HepG2 (cell line): ENCODE measurements at regions of chr15 and their contacts with region 1.

Region 1: DNA sequence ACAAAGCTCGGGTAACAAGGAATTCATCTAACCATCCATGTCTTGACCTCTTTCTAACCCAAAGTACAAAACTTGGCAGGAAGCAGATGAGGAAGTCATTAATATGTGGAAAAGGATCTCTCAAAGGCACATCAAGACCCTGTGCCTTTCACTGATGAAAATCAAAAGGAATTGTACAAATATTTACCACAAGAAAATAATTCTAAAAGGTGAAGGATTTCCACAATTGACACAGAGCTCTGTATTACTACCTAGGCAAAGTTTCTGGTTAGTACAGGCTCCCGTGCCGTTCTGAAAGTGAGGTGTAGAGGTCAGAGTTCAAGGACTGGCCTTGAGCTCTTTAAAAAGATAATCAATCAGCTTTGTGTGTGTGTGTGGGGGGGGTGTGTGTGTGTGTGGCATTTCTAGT is 239.7 kb upstream of the ICE2 start:
- DNase-seq: peak; percentile 81
- ATAC-seq: peak; percentile 86
- H3K4me3 ChIP-seq: no peak overlapping the region
- H3K27ac ChIP-seq: peak overlapping the region; percentile 41
- H3K4me1 ChIP-seq: peaks cover 66% of the 10 kb centered on the region
- H3K27me3 ChIP-seq: peaks cover 0 to 2% of the 10 kb centered on the region in 2 experiments; a peak in 1 of 5 replicates
- CTCF ChIP-seq: no peak
- EP300 ChIP-seq: peak in 1 of 2 experiments; percentile 89; a peak in 2 of 4 replicates
- POLR2A ChIP-seq: no peak
- RAD21 ChIP-seq: no peak

Region 2: GRCh38 chr15:62035256-62035908 is 1316.7 kb after region 1 on chr15:
- CTCF ChIA-PET with region 1: no interaction called
- POLR2A ChIA-PET with region 1: no interaction called
- in situ Hi-C with region 1: no loop called
- intact Hi-C with region 1: loop called (anchors 5 kb)
- DNase-seq: no peak
- ATAC-seq: no peak
- H3K4me3 ChIP-seq: no peak overlapping the region
- H3K27ac ChIP-seq: no peak overlapping the region
- H3K4me1 ChIP-seq: no peaks in the 10 kb centered on the region
- H3K27me3 ChIP-seq: no peaks in the 10 kb centered on the region
- CTCF ChIP-seq: no peak
- EP300 ChIP-seq: no peak
- POLR2A ChIP-seq: no peak
- RAD21 ChIP-seq: no peak